ENCODE measurements at regions of chr2 and their contacts with region 1.

Region 1: DNA sequence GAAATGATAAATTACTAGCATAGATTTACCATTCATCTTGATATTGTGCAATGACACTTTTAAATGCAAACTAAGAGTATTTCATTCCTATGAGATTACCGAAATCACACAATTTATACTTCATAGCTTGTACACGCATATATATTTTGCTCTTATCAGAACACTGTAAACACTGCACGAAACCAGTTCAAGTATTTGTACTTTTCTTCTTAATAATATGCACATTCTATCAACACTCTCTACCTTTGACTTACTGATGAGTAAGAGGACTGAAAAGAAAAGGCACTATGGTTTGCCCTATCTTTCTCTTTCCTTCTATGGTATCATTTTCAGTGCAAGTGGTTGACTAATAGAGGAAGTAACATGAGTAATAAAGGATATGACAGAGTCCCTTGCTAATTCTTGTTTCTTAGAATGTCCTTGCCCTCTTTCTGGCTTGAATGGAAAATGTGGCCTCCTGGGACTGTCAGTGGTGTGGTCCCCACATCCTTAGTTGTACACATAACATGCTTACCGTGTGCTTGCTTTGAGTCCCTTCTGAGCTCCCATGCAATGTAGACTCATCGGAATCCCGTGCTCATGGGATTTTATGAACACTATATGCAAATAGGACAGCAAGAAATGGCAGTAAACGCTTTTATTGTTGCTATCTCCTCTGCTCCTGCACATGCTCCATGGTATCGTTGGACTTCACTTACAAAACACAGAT is 363.5 kb upstream of the TNP1 start:
- DNase-seq: peak; percentile 76 to 94 (median 92)
- H3K4me3 ChIP-seq: peak overlapping the region in 2 of 3 experiments; percentile 5 to 57
- H3K4me3 Mint-ChIP-seq: peak overlapping the region in 1 of 2 donors; percentile 68
- H3K27ac ChIP-seq: peak overlapping the region in 1 of 2 donors; percentile 60
- H3K27ac Mint-ChIP-seq: peak overlapping the region; percentile 67 to 91 (median 86)
- H3K4me1 ChIP-seq: peaks cover 56 to 62% of the 10 kb centered on the region in 2 donors
- H3K4me1 Mint-ChIP-seq: peaks cover 58% of the 10 kb centered on the region
- H3K27me3 ChIP-seq: peaks cover 68 to 77% of the 10 kb centered on the region in 2 donors
- H3K27me3 Mint-ChIP-seq: peaks cover 63 to 73% (median 68%) of the 10 kb centered on the region in 3 donors
- CTCF ChIP-seq: no peak

Region 2: DNA sequence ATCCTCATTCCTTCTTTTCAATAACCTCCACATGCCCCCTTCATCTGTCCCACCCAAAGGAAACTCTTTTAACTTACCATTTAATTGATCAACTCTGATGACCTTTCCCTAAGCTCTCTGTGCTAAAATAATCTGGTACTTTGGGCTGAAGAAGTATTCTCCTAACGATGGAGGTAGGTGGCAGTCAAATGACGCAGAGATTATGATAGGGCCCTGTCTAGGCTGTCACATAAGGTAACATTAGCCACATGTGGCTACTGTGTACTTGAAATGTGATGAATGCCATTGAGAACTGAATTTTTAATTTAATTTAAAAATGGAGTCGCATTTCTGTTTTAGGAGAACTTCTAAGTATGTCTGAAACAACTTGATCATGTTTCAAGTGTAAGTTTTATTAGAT is 223.0 kb before region 1 on chr2:
- intact Hi-C with region 1: no loop called
- DNase-seq: no peak
- H3K4me3 ChIP-seq: no peak overlapping the region
- H3K4me3 Mint-ChIP-seq: no peak overlapping the region
- H3K27ac ChIP-seq: no peak overlapping the region
- H3K27ac Mint-ChIP-seq: no peak overlapping the region
- H3K4me1 ChIP-seq: no peaks in the 10 kb centered on the region
- H3K4me1 Mint-ChIP-seq: no peaks in the 10 kb centered on the region
- H3K27me3 ChIP-seq: peaks cover 3 to 5% of the 10 kb centered on the region in 2 donors
- H3K27me3 Mint-ChIP-seq: peaks cover 4 to 16% (median 10%) of the 10 kb centered on the region in 3 donors
- CTCF ChIP-seq: no peak

Region 3: DNA sequence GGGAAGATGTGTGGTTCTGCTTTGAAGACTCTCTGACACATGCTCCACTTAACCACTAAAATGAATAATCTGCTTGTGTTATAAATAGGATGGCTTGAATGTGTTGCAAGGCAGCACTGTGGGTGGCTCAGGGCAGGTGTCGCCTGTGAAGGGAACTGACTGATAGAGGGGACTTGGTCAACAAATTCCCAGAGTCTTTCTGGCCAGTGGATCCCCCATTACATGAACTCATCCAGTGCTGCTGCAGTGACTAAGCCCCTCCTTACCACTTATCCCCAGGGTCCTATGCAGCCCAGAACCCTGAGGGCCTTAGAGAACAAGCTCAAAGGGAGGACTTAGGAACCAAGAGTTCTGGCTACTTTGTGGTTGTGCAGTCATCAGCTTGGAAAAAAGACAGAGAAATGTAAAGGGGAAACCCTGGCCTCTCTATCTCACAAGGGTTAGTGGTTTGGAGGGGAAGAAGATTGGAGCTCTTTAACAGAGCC is 137.3 kb before region 1 on chr2:
- intact Hi-C with region 1: loop called in 1 of 2 experiments (anchors 5 kb)
- DNase-seq: peak in 2 of 3 donors; percentile 29 to 51
- H3K4me3 ChIP-seq: no peak overlapping the region
- H3K4me3 Mint-ChIP-seq: peak overlapping the region in 1 of 2 donors; percentile 6
- H3K27ac ChIP-seq: no peak overlapping the region
- H3K27ac Mint-ChIP-seq: peak overlapping the region in 3 of 7 donors; percentile 57 to 79 (median 73)
- H3K4me1 ChIP-seq: peaks cover 19 to 29% of the 10 kb centered on the region in 2 donors
- H3K4me1 Mint-ChIP-seq: peaks cover 46% of the 10 kb centered on the region
- H3K27me3 ChIP-seq: no peaks in the 10 kb centered on the region
- H3K27me3 Mint-ChIP-seq: peaks cover 3 to 16% (median 6%) of the 10 kb centered on the region in 3 donors
- CTCF ChIP-seq: no peak

Region 4: DNA sequence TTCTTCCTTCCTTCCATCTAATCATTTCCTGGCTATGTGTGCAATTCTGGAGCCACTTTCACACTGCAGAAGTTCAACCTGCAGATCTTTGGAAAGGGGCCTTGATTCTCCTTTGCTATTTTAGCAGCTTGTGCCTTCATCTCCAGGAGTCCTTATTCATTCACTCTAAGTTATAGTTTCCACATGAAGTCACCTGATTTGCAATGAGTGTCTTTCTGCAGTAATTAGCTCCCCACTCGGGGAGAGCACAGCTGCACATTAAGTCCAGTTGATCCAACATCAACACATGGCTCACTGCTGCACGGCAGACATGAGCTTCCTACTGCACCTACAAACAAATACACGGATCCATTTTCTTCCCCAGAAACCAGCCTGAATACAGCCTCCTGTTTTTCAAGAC is 40.5 kb before region 1 on chr2:
- intact Hi-C with region 1: no loop called
- DNase-seq: no peak
- H3K4me3 ChIP-seq: no peak overlapping the region
- H3K4me3 Mint-ChIP-seq: no peak overlapping the region
- H3K27ac ChIP-seq: no peak overlapping the region
- H3K27ac Mint-ChIP-seq: no peak overlapping the region
- H3K4me1 ChIP-seq: no peaks in the 10 kb centered on the region
- H3K4me1 Mint-ChIP-seq: no peaks in the 10 kb centered on the region
- H3K27me3 ChIP-seq: peaks cover 23 to 24% of the 10 kb centered on the region in 2 donors
- H3K27me3 Mint-ChIP-seq: peaks cover 0 to 31% (median 15%) of the 10 kb centered on the region in 3 donors
- CTCF ChIP-seq: no peak